Naive thymus-derived CD8-positive, alpha-beta T cell (primary cell): ENCODE measurements at regions of chr3 and their contacts with region 1.

Region 1: DNA sequence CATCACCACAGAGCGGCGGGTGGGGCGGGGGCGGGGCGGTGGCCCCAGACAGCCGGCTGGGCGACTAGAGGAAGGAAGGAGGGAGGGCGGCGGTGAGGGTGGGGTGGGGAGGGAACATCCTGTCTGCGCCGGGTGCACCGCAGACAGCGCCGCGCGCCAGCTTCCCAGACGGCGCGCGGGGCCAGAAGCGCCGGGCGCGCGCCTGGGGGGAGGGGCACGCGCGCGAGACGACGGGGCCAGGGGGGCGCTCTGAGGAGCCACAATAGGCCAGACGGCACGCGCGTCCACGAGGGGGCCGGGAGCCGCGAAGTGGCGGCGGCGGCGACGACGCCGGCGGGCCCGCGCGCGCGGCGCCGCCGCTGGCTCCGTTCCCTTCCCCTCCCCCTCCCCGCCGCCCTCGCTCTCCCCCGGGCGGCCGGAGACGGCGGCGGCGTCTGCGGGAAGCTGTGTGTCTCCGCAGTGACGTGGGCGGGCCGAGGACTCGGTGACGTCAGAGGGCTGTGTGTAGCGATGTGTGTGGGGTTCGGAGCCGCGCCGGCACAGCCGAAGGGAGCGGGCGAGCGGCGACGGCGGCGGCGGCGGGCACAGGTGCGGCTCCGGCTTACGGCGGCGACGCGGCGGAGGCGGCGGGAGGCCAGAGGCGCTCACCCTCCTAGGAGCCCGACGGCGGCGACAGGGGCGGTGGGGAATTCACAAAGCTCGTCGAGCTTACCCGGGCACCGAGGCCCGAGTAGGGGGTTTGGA is at the start of gene SKIL:
- DNase-seq: peak; percentile 95 to 99 (median 96)
- ATAC-seq: peak; percentile 75 to 81
- H3K4me3 Mint-ChIP-seq: peak within 1 kb of the TSS; percentile 87 to 98 (median 94)
- H3K27ac Mint-ChIP-seq: peak within 1 kb of the TSS; percentile 93 to 100 (median 98)
- H3K4me1 Mint-ChIP-seq: peaks cover 21 to 78% (median 53%) of the 10 kb centered on the region in 4 donors
- H3K27me3 Mint-ChIP-seq: no peaks in the 10 kb centered on the region
- polyA plus RNA-seq, gene SKIL: 2.5 to 6.6 (median 2.9) TPM

Region 2: GRCh38 chr3:169764452-169765274 is 592.7 kb before region 1 on chr3 and contains the start of gene TERC:
- POLR2A ChIA-PET with region 1: interaction called, 20 read pairs
- DNase-seq: peak; percentile 83 to 98 (median 94)
- ATAC-seq: peak; percentile 87 to 90
- H3K4me3 Mint-ChIP-seq: peak within 1 kb of the TSS; percentile 87 to 98 (median 96)
- H3K27ac Mint-ChIP-seq: peak within 1 kb of the TSS; percentile 95 to 100 (median 98)
- H3K4me1 Mint-ChIP-seq: peaks cover 7 to 28% (median 27%) of the 10 kb centered on the region in 4 donors
- H3K27me3 Mint-ChIP-seq: no peaks in the 10 kb centered on the region
- polyA plus RNA-seq, gene TERC: 1.4 to 1.6 TPM in 2 of 3 donors, not detected in the other

Region 3: GRCh38 chr3:169772897-169773828 is 584.2 kb before region 1 on chr3 and contains the start of gene MYNN:
- POLR2A ChIA-PET with region 1: interaction called, 12 read pairs
- DNase-seq: peak; percentile 83 to 95 (median 92)
- ATAC-seq: peak; percentile 78 to 81
- H3K4me3 Mint-ChIP-seq: peak within 1 kb of the TSS; percentile 91 to 99 (median 99)
- H3K27ac Mint-ChIP-seq: peak within 1 kb of the TSS; percentile 97 to 100 (median 99)
- H3K4me1 Mint-ChIP-seq: peaks cover 22 to 56% (median 51%) of the 10 kb centered on the region in 4 donors
- H3K27me3 Mint-ChIP-seq: peaks cover 0 to 3% (median 0%) of the 10 kb centered on the region in 5 donors
- polyA plus RNA-seq, gene MYNN: 11.7 to 15.7 (median 13.6) TPM

Region 4: DNA sequence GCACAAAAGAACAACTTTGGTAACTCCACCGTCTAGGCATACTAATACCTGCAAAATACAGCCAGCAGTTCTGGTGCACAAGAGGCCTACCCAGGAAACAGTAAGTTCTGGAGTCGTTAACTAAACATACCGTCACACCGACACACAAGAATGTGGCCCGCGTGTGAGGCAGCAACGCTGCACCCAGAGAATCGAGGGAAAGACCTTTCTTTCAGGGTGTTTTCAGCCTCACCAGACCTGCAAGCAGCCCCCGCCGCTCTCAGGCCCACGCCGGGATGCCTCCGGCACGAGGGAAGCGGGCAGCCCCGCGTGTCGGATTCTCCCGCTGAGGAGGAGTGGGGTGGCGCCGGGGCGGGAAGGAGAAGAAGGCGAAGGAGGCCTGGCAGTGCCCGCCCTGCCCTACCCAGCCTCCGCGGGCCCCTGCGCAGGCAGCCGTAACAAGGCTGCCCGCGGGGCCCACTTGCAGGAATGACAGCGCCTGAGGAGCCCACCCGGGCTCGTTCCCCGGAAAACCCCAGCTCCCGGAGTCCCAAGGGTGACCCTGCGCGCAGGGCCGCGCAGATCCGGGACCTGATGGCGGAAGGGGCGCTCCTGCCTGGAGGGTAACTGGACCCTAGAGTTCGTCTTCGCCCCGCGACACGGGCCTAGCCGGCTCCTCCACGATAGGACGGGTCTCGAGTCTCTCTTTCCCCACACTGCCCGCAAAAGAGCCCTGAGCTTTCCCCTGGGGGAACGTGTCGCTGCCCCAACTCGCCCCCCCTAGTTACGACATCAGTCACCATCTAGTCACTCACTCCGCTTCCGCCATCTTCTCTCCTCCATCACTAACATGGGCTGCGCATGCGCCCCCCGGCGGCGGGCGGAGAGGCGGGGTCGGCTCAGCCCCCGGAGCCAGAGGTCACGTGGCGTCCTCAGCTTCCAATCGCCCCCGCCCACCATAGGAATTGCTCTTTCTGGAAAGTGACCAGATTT is 176.2 kb before region 1 on chr3 and contains the start of gene PHC3:
- POLR2A ChIA-PET with region 1: interaction called, 25 read pairs
- DNase-seq: peak; percentile 88 to 96 (median 92)
- ATAC-seq: peak; percentile 70 to 72
- H3K4me3 Mint-ChIP-seq: peak within 1 kb of the TSS; percentile 96 to 100 (median 98)
- H3K27ac Mint-ChIP-seq: peak within 1 kb of the TSS; percentile 99 to 100 (median 100)
- H3K4me1 Mint-ChIP-seq: peaks cover 14 to 39% (median 33%) of the 10 kb centered on the region in 4 donors
- H3K27me3 Mint-ChIP-seq: no peaks in the 10 kb centered on the region
- polyA plus RNA-seq, gene PHC3: 34.5 to 54.8 (median 38.8) TPM

Region 5: DNA sequence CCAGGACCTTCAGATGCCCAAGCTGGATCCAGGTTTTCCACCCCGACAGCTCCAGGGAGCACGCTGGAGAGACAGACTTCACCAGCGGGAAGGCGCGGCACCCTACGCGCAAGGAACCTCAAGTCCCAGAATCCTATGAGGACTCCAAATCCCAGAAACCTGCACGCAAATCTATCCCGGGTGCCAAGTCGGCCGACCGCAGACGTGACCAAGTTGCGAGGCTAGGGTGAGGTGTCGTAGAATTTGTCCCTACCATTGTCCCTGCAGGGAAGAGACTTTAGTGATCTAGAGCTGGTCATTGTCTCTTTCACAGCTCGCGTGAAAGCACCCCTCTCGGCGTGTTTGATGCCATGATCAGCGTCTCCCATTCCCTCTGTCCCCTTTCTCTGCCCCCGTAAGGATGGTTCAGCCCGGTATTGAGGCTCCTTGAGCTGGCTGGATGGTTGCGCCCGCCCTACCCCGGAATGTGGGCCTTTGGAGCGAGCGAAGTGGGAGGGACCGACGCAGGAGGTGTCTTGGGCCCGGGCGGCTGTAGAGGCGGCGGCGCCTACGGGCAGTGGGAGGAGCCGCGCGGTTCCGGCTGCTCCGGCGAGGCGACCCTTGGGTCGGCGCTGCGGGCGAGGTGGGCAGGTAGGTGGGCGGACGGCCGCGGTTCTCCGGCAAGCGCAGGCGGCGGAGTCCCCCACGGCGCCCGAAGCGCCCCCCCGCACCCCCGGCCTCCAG is 135.3 kb before region 1 on chr3 and contains the start of gene PRKCI:
- POLR2A ChIA-PET with region 1: interaction called, 10 read pairs
- DNase-seq: peak; percentile 70 to 90 (median 78)
- ATAC-seq: peak; percentile 77 to 88
- H3K4me3 Mint-ChIP-seq: peak within 1 kb of the TSS; percentile 87 to 97 (median 94)
- H3K27ac Mint-ChIP-seq: peak within 1 kb of the TSS; percentile 91 to 99 (median 96)
- H3K4me1 Mint-ChIP-seq: peaks cover 12 to 37% (median 33%) of the 10 kb centered on the region in 4 donors
- H3K27me3 Mint-ChIP-seq: no peaks in the 10 kb centered on the region
- polyA plus RNA-seq, gene PRKCI: 10.8 to 15.0 (median 14.1) TPM

Region 6: DNA sequence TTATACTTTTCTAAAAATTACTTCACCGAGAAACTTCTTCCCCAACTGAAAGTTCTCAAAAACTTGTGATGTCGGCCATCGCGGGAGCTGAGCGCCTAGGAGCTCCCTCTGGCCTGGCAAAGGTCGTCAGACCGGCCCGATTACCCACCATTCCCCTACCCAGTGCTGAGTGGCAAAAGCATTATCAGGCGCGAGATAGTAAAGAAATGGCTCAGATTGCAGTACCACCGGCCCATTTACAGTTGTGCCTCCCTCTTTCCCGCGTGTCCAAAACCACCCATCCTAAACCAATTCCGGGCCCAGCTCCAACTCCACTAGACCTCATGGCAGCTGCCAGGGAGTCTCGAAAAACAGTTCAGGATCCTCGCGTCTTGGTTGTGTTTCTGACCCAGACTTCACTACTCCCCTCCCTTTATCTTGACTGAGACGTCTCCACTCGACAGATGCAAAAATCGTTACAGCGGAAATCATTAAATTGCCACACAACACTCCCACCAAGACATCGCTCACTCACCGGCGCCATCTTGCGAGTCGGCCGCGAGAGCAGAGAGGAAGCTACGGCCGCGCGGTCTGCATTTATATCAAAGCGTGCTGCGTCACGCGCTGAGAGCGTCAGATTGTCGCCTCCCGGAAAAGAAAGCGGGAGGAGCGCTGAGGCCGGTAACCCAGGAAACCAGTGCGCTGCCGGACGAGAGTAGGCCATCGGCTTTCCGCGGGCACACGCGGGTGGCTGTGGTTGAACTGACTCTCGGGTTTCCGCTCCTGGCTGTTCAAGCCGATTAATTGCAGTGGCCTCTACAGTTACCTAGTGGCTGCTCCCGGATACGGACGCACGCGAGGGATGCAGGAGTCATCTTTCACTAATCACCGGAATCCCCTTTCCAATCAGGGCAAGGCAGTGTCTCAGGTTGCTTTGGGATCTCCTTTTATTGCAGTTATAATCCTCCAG is 512.6 kb after region 1 on chr3 and contains the start of gene RPL22L1:
- POLR2A ChIA-PET with region 1: interaction called, 16 read pairs
- DNase-seq: peak; percentile 73 to 96 (median 91)
- ATAC-seq: peak; percentile 92
- H3K4me3 Mint-ChIP-seq: peak within 1 kb of the TSS; percentile 90 to 99 (median 95)
- H3K27ac Mint-ChIP-seq: peak within 1 kb of the TSS; percentile 95 to 100 (median 98)
- H3K4me1 Mint-ChIP-seq: peaks cover 12 to 42% (median 36%) of the 10 kb centered on the region in 4 donors
- H3K27me3 Mint-ChIP-seq: no peaks in the 10 kb centered on the region
- polyA plus RNA-seq, gene RPL22L1: 31.8 to 43.3 (median 36.2) TPM